Ascending aorta (tissue), 2 donors: ENCODE measurements at regions of chr3 and their contacts with region 1.

Region 1: GRCh38 chr3:149657926-149658733 is at the start of gene WWTR1:
- DNase-seq: peak; percentile 79 to 97
- H3K4me3 ChIP-seq: peak within 1 kb of the TSS; percentile 81 to 83
- H3K27ac ChIP-seq: peak within 1 kb of the TSS; percentile 94 to 95
- H3K4me1 ChIP-seq: peaks cover 10 to 20% of the 10 kb centered on the region in 2 donors
- H3K27me3 ChIP-seq: no peaks in the 10 kb centered on the region
- CTCF ChIP-seq: peak; percentile 24 to 57 (median 33)
- total RNA-seq, gene WWTR1: 282 TPM

Region 2: DNA sequence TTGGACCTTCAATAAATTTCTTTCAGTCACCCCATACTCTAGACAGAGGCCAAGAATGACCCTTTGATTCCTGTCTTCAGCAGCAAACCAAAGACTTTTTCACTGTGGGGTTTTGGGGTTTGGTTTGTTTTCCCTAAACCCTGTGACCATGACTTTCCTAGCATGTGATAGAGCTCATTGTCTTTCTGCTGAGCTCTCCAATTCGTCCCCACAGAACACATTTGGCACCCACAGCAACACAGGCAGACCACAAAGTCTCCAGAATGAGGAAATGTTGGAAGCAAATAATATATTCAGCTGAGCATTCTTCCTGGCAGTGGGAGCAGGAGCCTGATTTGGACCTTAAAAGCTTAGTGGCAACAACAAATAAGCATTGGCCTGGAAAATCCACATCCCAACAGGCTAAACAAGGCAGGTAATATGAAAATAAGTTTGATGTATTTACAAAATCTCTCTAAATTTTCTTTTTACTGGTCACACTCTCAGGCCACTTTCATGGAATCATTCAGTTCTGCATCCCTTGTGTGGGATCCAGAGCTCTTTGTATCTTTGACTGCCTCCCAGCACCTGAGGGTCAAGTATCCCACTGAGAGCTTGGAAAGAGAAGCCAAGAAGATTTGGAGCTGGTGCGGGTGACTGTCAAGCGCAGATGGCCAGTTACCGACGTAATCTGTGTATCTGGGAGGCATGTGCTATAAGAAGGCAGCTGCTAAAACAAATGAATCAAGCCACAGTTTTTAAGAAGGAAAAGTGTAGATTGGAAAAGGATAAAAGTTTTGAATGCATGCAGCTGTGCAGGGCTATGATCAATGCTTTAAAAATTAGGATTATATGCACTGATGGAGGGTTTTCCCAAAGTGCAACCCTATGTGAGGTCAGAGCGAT is 867.0 kb before region 1 on chr3:
- intact Hi-C with region 1: no loop called
- DNase-seq: no peak
- H3K4me3 ChIP-seq: no peak overlapping the region
- H3K27ac ChIP-seq: no peak overlapping the region
- H3K4me1 ChIP-seq: no peaks in the 10 kb centered on the region
- H3K27me3 ChIP-seq: no peaks in the 10 kb centered on the region
- CTCF ChIP-seq: no peak

Region 3: DNA sequence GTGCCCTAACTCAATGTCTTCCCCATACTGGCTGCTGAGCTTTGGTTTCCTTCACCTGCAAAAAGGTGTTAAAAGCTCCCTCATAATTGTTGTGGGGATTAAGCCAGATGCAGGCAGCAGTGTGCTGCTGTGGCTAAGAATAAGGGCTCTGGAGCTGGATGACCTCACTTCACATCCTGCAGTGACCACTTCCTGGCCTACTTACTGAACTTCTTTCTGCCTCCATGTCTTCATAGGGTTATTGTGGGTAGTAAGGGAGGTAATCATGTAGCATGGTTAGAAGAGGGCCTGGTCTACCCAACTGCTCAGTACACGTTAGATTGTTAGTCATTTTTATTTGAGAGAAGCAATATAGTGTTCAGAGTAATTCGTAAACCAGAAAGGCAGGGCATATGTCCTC is 648.4 kb before region 1 on chr3:
- intact Hi-C with region 1: loop called (anchors 10 kb)
- DNase-seq: no peak
- H3K4me3 ChIP-seq: no peak overlapping the region
- H3K27ac ChIP-seq: peak overlapping the region; percentile 59 to 90
- H3K4me1 ChIP-seq: peaks cover 6 to 22% of the 10 kb centered on the region in 2 donors
- H3K27me3 ChIP-seq: no peaks in the 10 kb centered on the region
- CTCF ChIP-seq: no peak

Region 4: GRCh38 chr3:149512209-149512782 is 145.8 kb before region 1 on chr3:
- intact Hi-C with region 1: loop called (anchors 2 kb)
- DNase-seq: peak in 1 of 2 donors; percentile 83
- H3K4me3 ChIP-seq: no peak overlapping the region
- H3K27ac ChIP-seq: no peak overlapping the region
- H3K4me1 ChIP-seq: peaks cover 1 to 20% of the 10 kb centered on the region in 2 donors
- H3K27me3 ChIP-seq: no peaks in the 10 kb centered on the region
- CTCF ChIP-seq: peak; percentile 66 to 85 (median 71)

Region 5: GRCh38 chr3:149575961-149576564 is 82.1 kb before region 1 on chr3:
- intact Hi-C with region 1: loop called (anchors 2 kb)
- DNase-seq: peak in 1 of 2 donors; percentile 84
- H3K4me3 ChIP-seq: peak overlapping the region in 1 of 2 donors; percentile 35
- H3K27ac ChIP-seq: peak overlapping the region; percentile 93 to 94
- H3K4me1 ChIP-seq: peaks cover 16 to 83% of the 10 kb centered on the region in 2 donors
- H3K27me3 ChIP-seq: no peaks in the 10 kb centered on the region
- CTCF ChIP-seq: no peak

Region 6: GRCh38 chr3:149646181-149646766 is 11.9 kb before region 1 on chr3:
- intact Hi-C with region 1: no loop called
- DNase-seq: no peak
- H3K4me3 ChIP-seq: no peak overlapping the region
- H3K27ac ChIP-seq: peak overlapping the region; percentile 59 to 67
- H3K4me1 ChIP-seq: peaks cover 18 to 56% of the 10 kb centered on the region in 2 donors
- H3K27me3 ChIP-seq: no peaks in the 10 kb centered on the region
- CTCF ChIP-seq: no peak

Region 7: DNA sequence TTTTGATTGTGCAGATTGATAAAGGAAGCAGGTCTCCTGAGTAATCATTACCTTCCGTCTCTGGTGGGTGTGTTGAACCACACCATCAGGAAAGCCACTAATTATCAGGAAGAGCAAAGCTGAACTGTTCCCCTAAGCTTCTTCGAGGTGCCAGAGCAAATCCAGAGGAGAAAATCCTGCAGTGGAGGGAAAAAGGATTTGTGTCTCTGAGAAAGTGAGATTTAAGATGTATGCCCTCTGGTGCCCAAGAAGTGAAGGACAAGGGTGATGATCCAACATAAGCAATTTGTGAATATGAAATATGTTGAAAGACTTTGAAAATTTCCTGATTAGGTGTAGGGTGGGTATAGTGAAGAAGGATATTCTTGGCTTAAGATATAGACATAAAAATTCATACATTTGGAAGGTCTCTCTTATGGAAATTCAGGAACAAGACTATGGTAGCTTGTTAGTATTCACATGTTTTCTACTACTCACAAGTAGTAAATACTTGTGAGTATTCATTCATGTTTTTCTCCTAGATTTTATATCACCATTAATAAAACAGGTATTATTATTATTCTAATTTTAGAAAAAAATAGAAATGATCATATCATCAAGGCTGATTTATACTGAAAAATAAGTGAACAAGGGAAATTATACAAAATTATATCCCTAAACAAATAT is 59.4 kb after region 1 on chr3:
- intact Hi-C with region 1: loop called (anchors 5 kb)
- DNase-seq: peak in 1 of 2 donors; percentile 83
- H3K4me3 ChIP-seq: peak overlapping the region in 1 of 2 donors; percentile 16
- H3K27ac ChIP-seq: no peak overlapping the region
- H3K4me1 ChIP-seq: peaks cover 2 to 3% of the 10 kb centered on the region in 2 donors
- H3K27me3 ChIP-seq: no peaks in the 10 kb centered on the region
- CTCF ChIP-seq: peak; percentile 51 to 73 (median 69)